Activated CD8-positive, alpha-beta T cell treated with anti-CD3 and anti-CD28 coated beads for 36 hours (primary cell): ENCODE measurements at regions of chr21 and their contacts with region 1.

Region 1: GRCh38 chr21:34129039-34129891 is 55.9 kb downstream of the MRPS6 start:
- DNase-seq: peak; percentile 90
- ATAC-seq: peak; percentile 92
- H3K4me3 Mint-ChIP-seq: peak overlapping the region; percentile 58
- H3K27ac Mint-ChIP-seq: peak overlapping the region; percentile 92
- H3K4me1 Mint-ChIP-seq: peaks cover 80% of the 10 kb centered on the region
- H3K27me3 Mint-ChIP-seq: no peaks in the 10 kb centered on the region
- CTCF ChIP-seq: no peak

Region 2: GRCh38 chr21:34020005-34020847 is 109.0 kb before region 1 on chr21:
- CTCF ChIA-PET with region 1: no interaction called
- POLR2A ChIA-PET with region 1: no interaction called
- intact Hi-C with region 1: no loop called
- DNase-seq: no peak
- ATAC-seq: no peak
- H3K4me3 Mint-ChIP-seq: no peak overlapping the region
- H3K27ac Mint-ChIP-seq: peak overlapping the region; percentile 2
- H3K4me1 Mint-ChIP-seq: peaks cover 23% of the 10 kb centered on the region
- H3K27me3 Mint-ChIP-seq: no peaks in the 10 kb centered on the region
- CTCF ChIP-seq: no peak

Region 3: DNA sequence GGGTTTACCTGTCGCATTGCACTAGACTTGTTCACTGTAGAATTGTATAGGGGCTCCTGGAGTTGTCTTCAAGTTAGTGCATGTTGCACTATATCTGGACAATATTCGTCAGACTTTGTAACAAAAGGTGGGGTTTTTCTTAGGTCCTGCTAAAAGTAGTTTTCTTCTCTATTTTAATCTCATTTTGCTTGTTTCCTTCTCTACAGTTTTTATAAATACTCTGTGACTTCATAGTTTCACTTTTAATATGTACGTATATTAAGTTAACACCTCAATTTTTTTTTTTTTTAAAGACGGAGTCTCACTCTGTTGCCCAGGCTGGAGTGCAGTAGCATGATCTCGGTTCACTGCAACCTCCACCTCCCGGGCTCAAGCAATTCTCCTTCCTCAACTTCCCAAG is 82.3 kb before region 1 on chr21:
- CTCF ChIA-PET with region 1: no interaction called
- POLR2A ChIA-PET with region 1: no interaction called
- intact Hi-C with region 1: no loop called
- DNase-seq: no peak
- ATAC-seq: peak; percentile 34
- H3K4me3 Mint-ChIP-seq: peak overlapping the region; percentile 11
- H3K27ac Mint-ChIP-seq: no peak overlapping the region
- H3K4me1 Mint-ChIP-seq: peaks cover 13% of the 10 kb centered on the region
- H3K27me3 Mint-ChIP-seq: no peaks in the 10 kb centered on the region
- CTCF ChIP-seq: no peak

Region 4: GRCh38 chr21:34078915-34079314 is 50.4 kb before region 1 on chr21:
- CTCF ChIA-PET with region 1: interaction called, 6 read pairs
- POLR2A ChIA-PET with region 1: interaction called, 3 read pairs
- intact Hi-C with region 1: loop called (anchors 5 kb)
- DNase-seq: peak; percentile 62
- ATAC-seq: peak; percentile 15
- H3K4me3 Mint-ChIP-seq: peak overlapping the region; percentile 65
- H3K27ac Mint-ChIP-seq: peak overlapping the region; percentile 92
- H3K4me1 Mint-ChIP-seq: peaks cover 88% of the 10 kb centered on the region
- H3K27me3 Mint-ChIP-seq: no peaks in the 10 kb centered on the region
- CTCF ChIP-seq: no peak

Region 5: GRCh38 chr21:34202553-34203372 is 73.5 kb after region 1 on chr21:
- CTCF ChIA-PET with region 1: interaction called, 11 read pairs
- POLR2A ChIA-PET with region 1: interaction called, 4 read pairs
- intact Hi-C with region 1: loop called (anchors 2 kb)
- DNase-seq: no peak
- ATAC-seq: no peak
- H3K4me3 Mint-ChIP-seq: peak overlapping the region; percentile 67
- H3K27ac Mint-ChIP-seq: peak overlapping the region; percentile 17
- H3K4me1 Mint-ChIP-seq: peaks cover 49% of the 10 kb centered on the region
- H3K27me3 Mint-ChIP-seq: no peaks in the 10 kb centered on the region
- CTCF ChIP-seq: no peak

Region 6: GRCh38 chr21:34213959-34214358 is 84.7 kb after region 1 on chr21:
- CTCF ChIA-PET with region 1: no interaction called
- POLR2A ChIA-PET with region 1: no interaction called
- intact Hi-C with region 1: no loop called
- DNase-seq: no peak
- ATAC-seq: no peak
- H3K4me3 Mint-ChIP-seq: no peak overlapping the region
- H3K27ac Mint-ChIP-seq: no peak overlapping the region
- H3K4me1 Mint-ChIP-seq: no peaks in the 10 kb centered on the region
- H3K27me3 Mint-ChIP-seq: no peaks in the 10 kb centered on the region
- CTCF ChIP-seq: no peak